GM18951 (cell line): ENCODE measurements at regions of chr2 and their contacts with region 1.

Region 1: GRCh38 chr2:151409601-151410484 is at the start of gene RIF1:
- POLR2A ChIP-seq: peak; percentile 77

Region 2: GRCh38 chr2:150997702-150998440 is 412.0 kb before region 1 on chr2:
- in situ Hi-C with region 1: no loop called
- POLR2A ChIP-seq: no peak

Region 3: DNA sequence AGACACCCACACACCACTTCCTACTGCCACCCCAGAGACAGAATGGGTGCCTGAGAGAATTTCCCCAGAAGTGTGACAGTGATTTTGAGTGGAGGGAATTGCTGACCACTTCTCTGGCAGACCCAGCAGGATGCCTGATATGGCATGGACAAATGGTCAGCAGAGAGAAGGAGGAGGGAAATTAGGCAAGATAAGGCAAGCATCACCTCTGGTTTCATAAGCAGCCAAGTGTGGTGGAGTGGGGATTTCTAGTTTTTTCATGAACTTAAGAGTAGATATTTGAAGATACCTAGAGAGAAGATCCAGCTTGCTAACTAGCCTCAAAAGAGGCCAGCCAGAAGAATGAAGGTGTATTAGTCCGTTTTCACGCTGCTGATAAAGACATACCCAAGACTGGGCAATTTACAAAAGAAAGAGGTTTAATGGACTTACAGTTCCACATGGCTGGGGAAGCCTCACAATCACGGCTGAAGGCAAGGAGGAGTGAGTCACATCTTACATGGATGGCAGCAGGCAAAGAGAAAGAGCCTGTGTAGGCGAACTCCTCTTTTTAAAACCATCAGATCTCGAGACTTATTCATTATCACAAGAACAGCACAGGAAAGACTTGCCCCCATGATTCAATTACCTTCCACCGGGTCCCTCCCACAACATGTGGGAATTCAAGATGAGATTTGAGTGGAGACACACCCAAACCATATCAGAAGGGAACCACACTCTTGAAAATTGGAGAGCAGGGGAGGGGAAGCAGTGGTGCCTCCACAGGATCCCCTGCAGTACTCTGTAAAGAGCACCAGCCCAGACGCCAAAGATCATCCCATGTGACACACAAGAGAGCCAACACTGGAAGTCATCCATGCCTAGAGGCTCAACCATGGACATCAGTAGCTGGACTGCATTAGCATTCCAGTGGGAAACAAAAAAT is 212.4 kb before region 1 on chr2:
- in situ Hi-C with region 1: no loop called
- POLR2A ChIP-seq: no peak

Region 4: GRCh38 chr2:151261231-151261976 is 148.4 kb before region 1 on chr2 and contains the start of gene RBM43:
- in situ Hi-C with region 1: loop called (anchors 10 kb)
- POLR2A ChIP-seq: peak; percentile 86